B cell (primary cell): ENCODE measurements at regions of chr19 and their contacts with region 1.

Region 1: GRCh38 chr19:11197264-11198174 is at the start of gene KANK2:
- DNase-seq: peak; percentile 83
- ATAC-seq: peak; percentile 92
- H3K4me3 ChIP-seq: peak within 1 kb of the TSS in 4 of 5 experiments; percentile 33 to 62 (median 54)
- H3K4me3 Mint-ChIP-seq: peak within 1 kb of the TSS; percentile 88
- H3K27ac ChIP-seq: no peak within 1 kb of the TSS
- H3K27ac Mint-ChIP-seq: no peak within 1 kb of the TSS
- H3K4me1 ChIP-seq: peaks cover 16 to 23% of the 10 kb centered on the region in 2 donors
- H3K4me1 Mint-ChIP-seq: peaks cover 13% of the 10 kb centered on the region
- H3K27me3 ChIP-seq: peaks cover 0 to 32% (median 8%) of the 10 kb centered on the region in 4 experiments
- H3K27me3 Mint-ChIP-seq: peaks cover 11% of the 10 kb centered on the region
- CTCF ChIP-seq: no peak
- total RNA-seq, gene KANK2: 15.2 and 18.9 TPM in 2 replicates

Region 2: DNA sequence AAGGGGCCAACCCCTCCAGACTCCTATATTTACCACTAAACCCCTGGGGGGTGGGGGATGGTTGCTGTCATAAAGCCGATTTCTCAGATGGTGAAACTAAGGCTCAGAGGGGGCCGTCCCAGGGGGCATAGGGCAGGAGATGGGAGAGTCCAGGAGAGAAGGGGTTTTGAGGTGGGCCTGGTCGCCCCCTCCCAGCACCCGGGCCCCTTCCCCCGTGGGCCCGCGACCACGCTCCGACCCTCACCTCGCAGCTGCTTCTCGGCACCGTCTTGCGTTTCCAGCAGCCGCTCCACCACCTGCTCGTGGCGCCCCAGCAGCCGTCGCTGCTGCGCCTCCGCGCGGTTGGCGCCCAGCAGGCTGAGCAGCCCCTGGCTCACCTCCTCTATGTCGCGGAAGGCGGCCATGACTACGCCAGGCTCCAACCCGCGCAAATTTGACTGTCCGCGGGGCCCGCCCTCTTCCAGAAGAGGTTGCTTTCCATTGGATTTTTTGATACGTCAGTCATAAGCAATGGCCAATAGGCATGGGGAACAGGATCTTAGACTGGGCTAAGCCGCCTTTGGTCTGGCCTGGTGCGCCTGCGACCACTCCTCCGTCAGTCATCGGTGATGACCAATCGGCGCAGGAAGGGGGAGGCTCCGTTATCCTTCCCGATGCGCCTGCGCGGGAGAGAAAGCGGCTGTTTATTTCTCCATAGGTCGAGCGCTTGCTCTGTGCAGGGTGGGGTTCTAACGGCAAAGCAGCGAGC is 42.0 kb before region 1 on chr19 and contains the start of gene SPC24:
- CTCF ChIA-PET with region 1: no interaction called
- POLR2A ChIA-PET with region 1: no interaction called
- intact Hi-C with region 1: loop called (anchors 5 kb)
- DNase-seq: peak; percentile 94
- ATAC-seq: peak; percentile 99
- H3K4me3 ChIP-seq: peak within 1 kb of the TSS; percentile 52 to 67 (median 64)
- H3K4me3 Mint-ChIP-seq: peak within 1 kb of the TSS; percentile 91
- H3K27ac ChIP-seq: no peak within 1 kb of the TSS
- H3K27ac Mint-ChIP-seq: peak within 1 kb of the TSS; percentile 81
- H3K4me1 ChIP-seq: peaks cover 10 to 14% of the 10 kb centered on the region in 2 donors
- H3K4me1 Mint-ChIP-seq: peaks cover 10% of the 10 kb centered on the region
- H3K27me3 ChIP-seq: peaks cover 0 to 4% (median 0%) of the 10 kb centered on the region in 4 experiments
- H3K27me3 Mint-ChIP-seq: no peaks in the 10 kb centered on the region
- CTCF ChIP-seq: no peak
- total RNA-seq, gene SPC24: 0.15 and 0.90 TPM in 2 replicates